ENCODE measurements at regions of chr2 and their contacts with region 1.

Region 1: GRCh38 chr2:197499594-197500526 is at the starts of genes HSPD1 and HSPE1:
- DNase-seq: peak; percentile 99
- ATAC-seq: peak; percentile 94
- H3K4me3 ChIP-seq: peak within 1 kb of the TSS; percentile 74
- H3K27ac ChIP-seq: peak within 1 kb of the TSS; percentile 74
- H3K4me1 ChIP-seq: 0 out of 2 replicates have a peak, but pooled peaks cover 1% of the 10 kb centered on the region
- H3K27me3 ChIP-seq: no peaks in the 10 kb centered on the region
- CTCF ChIP-seq: no peak
- POLR2A ChIP-seq: peak; percentile 71
- RAD21 ChIP-seq: no peak
- total RNA-seq, gene HSPD1: 171 and 374 TPM in 2 replicates
- total RNA-seq, gene HSPE1: 13.3 and 60.3 TPM in 2 replicates

Region 2: GRCh38 chr2:197345846-197346370 is 154.0 kb before region 1 on chr2:
- CTCF ChIA-PET with region 1: no interaction called
- POLR2A ChIA-PET with region 1: no interaction called
- dilution Hi-C with region 1: no loop called
- in situ Hi-C with region 1: no loop called
- intact Hi-C with region 1: no loop called
- DNase-seq: peak; percentile 41
- ATAC-seq: peak; percentile 27; the same call in 1 of the 2 replicates
- H3K4me3 ChIP-seq: no peak overlapping the region
- H3K27ac ChIP-seq: no peak overlapping the region
- H3K4me1 ChIP-seq: no peaks in the 10 kb centered on the region
- H3K27me3 ChIP-seq: no peaks in the 10 kb centered on the region
- CTCF ChIP-seq: no peak
- POLR2A ChIP-seq: no peak
- RAD21 ChIP-seq: no peak

Region 3: DNA sequence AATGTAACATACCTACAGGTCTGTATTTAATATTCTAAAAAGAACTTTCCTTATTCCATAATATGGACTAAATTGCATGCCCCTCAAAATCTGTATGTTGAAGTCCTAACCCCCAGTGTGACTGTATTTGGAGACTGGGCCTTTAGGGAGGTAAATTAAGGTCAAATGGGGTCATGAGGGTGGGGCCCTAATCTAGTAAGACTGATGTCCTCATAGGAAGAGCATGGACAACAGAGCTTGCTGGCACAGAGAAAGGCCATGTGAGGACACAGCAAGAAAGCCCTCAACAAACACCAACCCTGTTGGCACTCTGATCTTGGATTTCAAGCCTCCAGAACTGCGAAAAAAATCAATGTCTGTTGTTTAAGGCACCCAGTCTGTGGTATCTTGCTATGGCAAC is 83.6 kb before region 1 on chr2:
- CTCF ChIA-PET with region 1: no interaction called
- POLR2A ChIA-PET with region 1: no interaction called
- dilution Hi-C with region 1: no loop called
- in situ Hi-C with region 1: loop called (anchors 5 kb)
- intact Hi-C with region 1: no loop called
- DNase-seq: no peak
- ATAC-seq: no peak
- H3K4me3 ChIP-seq: no peak overlapping the region
- H3K27ac ChIP-seq: no peak overlapping the region
- H3K4me1 ChIP-seq: no peaks in the 10 kb centered on the region; the same call in 1 of the 2 replicates
- H3K27me3 ChIP-seq: no peaks in the 10 kb centered on the region
- CTCF ChIP-seq: no peak
- POLR2A ChIP-seq: no peak
- RAD21 ChIP-seq: no peak

Region 4: DNA sequence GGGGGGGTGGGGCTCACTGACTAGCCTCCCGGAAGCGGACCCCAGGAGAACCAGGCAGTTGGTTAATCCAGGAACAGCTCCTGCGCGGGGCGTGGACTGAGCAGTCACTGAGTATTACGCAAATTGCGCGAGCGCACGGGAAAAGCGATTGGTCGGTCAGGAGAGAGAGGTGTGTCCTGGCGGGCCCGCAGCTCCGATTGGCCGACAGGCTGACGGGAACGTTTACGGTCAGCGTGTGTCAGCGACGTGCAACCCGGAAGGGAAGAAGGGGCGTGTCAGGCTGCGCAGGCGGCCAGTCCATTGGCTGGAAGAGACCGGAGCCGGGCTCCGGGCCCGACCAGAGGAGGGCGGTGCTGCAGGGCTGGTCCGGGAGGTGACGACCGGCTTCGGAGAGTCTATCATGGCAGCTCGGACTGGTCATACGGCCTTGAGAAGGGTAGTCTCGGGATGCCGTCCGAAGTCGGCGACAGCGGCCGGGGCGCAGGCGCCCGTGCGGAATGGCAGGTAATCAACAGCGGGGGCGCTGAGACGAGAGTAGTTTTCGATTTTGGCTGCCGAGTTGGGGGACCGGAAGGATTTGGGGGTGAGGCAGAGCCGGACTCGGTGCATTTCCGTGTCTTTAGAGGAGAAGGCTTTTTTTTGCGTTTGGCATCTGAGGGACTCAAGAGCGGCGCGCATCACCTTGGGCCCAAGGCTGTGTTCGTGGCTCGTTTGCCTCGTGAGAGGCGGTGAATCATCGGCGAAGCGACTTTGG is 46.5 kb before region 1 on chr2 and contains the start of gene COQ10B:
- CTCF ChIA-PET with region 1: no interaction called
- POLR2A ChIA-PET with region 1: interaction called, 3 read pairs
- dilution Hi-C with region 1: no loop called
- in situ Hi-C with region 1: no loop called
- intact Hi-C with region 1: loop called (anchors 5 kb)
- DNase-seq: peak; percentile 100
- ATAC-seq: peak; percentile 96
- H3K4me3 ChIP-seq: peak within 1 kb of the TSS; percentile 70
- H3K27ac ChIP-seq: peak within 1 kb of the TSS; percentile 92
- H3K4me1 ChIP-seq: no peaks in the 10 kb centered on the region
- H3K27me3 ChIP-seq: no peaks in the 10 kb centered on the region
- CTCF ChIP-seq: peak; percentile 37
- POLR2A ChIP-seq: peak; percentile 98
- RAD21 ChIP-seq: no peak
- total RNA-seq, gene COQ10B: 28.7 and 64.2 TPM in 2 replicates

Region 5: DNA sequence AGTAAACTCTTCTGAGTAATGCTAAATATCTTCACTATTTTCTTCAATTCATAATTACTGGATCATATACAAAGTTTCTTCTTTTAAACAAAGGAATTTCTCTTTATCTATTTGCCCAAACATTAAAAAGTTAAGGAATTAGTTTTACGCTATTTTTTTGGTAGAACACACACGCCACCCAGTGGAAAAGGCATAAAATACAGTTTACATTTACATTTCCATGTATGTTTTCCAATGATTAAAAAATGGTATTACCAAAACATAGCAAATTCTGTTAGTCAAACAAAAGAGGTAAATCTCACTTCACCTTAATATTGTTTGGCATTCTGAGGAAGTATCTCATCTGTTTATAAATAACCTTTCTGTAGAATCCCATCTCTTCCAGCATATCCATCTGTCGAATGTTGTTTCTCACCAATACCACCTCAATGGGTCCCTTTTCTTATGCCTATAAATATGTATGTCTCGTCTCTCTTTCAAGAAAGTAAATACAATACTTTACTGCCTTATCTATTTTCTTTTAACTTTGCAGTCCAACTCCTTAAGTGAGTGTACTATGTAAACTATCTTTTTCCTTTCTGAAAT is 278.1 kb after region 1 on chr2:
- CTCF ChIA-PET with region 1: no interaction called
- POLR2A ChIA-PET with region 1: no interaction called
- dilution Hi-C with region 1: no loop called
- in situ Hi-C with region 1: loop called (anchors 10 kb)
- intact Hi-C with region 1: loop called (anchors 2 kb)
- DNase-seq: peak; percentile 51
- ATAC-seq: peak; percentile 63
- H3K4me3 ChIP-seq: no peak overlapping the region
- H3K27ac ChIP-seq: no peak overlapping the region
- H3K4me1 ChIP-seq: no peaks in the 10 kb centered on the region
- H3K27me3 ChIP-seq: no peaks in the 10 kb centered on the region
- CTCF ChIP-seq: peak; percentile 79
- POLR2A ChIP-seq: no peak
- RAD21 ChIP-seq: peak; percentile 80

Region 6: GRCh38 chr2:198811198-198811597 is 1311.3 kb after region 1 on chr2:
- CTCF ChIA-PET with region 1: no interaction called
- POLR2A ChIA-PET with region 1: no interaction called
- dilution Hi-C with region 1: no loop called
- in situ Hi-C with region 1: no loop called
- intact Hi-C with region 1: no loop called
- DNase-seq: no peak
- ATAC-seq: no peak
- H3K4me3 ChIP-seq: no peak overlapping the region
- H3K27ac ChIP-seq: no peak overlapping the region
- H3K4me1 ChIP-seq: no peaks in the 10 kb centered on the region
- H3K27me3 ChIP-seq: no peaks in the 10 kb centered on the region
- CTCF ChIP-seq: no peak
- POLR2A ChIP-seq: no peak
- RAD21 ChIP-seq: no peak

Measured in IMR-90 (cell line).